ENCODE measurements at regions of chr11 and their contacts with region 1.

Region 1: DNA sequence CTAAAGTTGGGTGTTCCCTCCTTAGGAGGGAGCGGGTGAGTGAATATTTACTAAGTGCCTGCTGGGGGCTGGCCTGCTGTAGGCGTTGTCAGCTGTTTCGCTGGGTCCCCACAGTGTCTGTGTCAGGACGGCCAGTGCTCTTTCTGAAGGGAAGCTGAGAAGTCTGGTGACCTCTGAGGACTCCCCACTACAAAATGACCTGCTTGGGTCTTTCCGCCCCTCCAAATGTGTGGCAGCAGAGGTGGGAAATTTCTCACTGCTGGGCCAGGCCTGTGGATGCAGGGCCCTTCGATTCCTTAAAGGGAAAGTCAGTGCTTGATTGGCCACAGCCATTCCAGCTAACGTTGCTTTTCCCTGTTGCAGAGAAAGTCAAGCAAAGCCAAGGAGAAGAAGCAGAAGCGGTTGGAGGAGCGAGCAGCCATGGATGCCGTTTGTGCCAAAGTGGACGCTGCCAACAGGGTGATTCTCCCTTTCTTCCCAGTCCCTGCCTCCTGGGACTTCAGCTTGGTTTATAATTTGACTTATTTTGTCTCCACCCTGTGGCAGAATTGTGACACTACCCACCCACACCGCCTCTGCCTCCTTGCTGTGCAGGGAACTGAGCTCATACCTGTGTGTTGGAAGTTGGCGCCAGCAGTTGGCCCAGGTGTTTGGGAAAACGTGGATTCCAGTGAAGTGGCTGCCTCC is 6.8 kb downstream of the NAA40 start:
- DNase-seq: peak in 6 of 9 experiments; percentile 28 to 71 (median 58)
- ATAC-seq: peak; percentile 89
- H3K4me3 ChIP-seq: no peak overlapping the region
- H3K4me3 Mint-ChIP-seq: no peak overlapping the region
- H3K27ac ChIP-seq: no peak overlapping the region
- H3K27ac Mint-ChIP-seq: no peak overlapping the region
- H3K4me1 ChIP-seq: peaks cover under 1% of the 10 kb centered on the region
- H3K4me1 Mint-ChIP-seq: peaks cover 14% of the 10 kb centered on the region
- H3K27me3 ChIP-seq: no peaks in the 10 kb centered on the region
- H3K27me3 Mint-ChIP-seq: no peaks in the 10 kb centered on the region
- CTCF ChIP-seq: peak; percentile 62

Region 2: GRCh38 chr11:63906585-63906984 is 39.0 kb before region 1 on chr11:
- CTCF ChIA-PET with region 1: interaction called, 7 read pairs
- POLR2A ChIA-PET with region 1: no interaction called
- intact Hi-C with region 1: loop called (anchors 5 kb)
- DNase-seq: peak; percentile 28 to 74 (median 68)
- ATAC-seq: peak; percentile 77
- H3K4me3 ChIP-seq: no peak overlapping the region
- H3K4me3 Mint-ChIP-seq: no peak overlapping the region
- H3K27ac ChIP-seq: no peak overlapping the region
- H3K27ac Mint-ChIP-seq: no peak overlapping the region
- H3K4me1 ChIP-seq: no peaks in the 10 kb centered on the region
- H3K4me1 Mint-ChIP-seq: peaks cover 3% of the 10 kb centered on the region
- H3K27me3 ChIP-seq: no peaks in the 10 kb centered on the region
- H3K27me3 Mint-ChIP-seq: no peaks in the 10 kb centered on the region
- CTCF ChIP-seq: peak; percentile 38

Region 3: DNA sequence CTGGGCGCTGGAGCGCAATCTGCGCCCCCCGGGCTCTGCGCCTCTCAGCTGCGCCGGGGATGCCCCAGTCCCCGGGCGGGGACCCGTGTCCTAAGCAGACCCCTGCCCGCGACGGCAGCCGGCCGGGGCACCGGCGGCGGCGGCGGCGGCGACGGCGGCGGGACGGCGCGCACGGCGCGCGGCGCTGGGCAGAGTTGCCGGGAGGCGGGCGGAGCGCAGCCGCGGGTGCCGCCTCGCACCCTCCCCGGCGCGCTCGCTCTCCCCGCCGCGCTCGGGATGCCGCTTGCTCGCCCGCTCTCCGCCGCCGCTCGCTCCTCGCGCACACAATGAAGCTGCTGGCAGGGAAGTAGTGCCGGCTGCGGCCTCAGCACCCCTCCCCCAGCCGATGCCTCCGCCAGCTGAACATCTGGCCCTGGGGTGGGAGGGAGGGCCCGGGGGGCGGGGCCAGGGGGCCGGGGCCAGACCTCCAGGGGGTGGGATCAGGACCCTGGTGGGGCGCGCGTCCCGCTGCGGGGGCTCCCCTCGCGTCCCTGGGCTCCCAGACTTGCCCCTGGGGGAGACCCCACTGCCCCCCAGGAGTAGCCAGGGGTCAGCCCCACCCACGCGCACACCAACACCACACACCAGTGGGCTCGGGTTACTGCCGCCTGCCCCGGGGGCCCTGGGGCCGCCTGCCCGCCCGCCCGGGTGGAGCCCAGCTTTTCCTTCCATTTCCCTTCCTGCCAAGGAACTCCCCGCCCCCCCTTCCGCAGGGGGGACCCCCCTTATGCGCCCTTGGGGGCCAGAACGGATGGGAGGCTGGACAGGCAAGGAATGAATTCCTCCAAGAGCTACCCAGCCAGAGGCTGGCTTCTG is 28.6 kb before region 1 on chr11 and contains the start of gene RCOR2:
- CTCF ChIA-PET with region 1: interaction called, 12 read pairs
- POLR2A ChIA-PET with region 1: interaction called, 3 read pairs
- intact Hi-C with region 1: no loop called
- DNase-seq: peak in 8 of 9 experiments; percentile 32 to 78 (median 58)
- ATAC-seq: peak; percentile 65
- H3K4me3 ChIP-seq: peak within 1 kb of the TSS; percentile 47 to 48
- H3K4me3 Mint-ChIP-seq: peak within 1 kb of the TSS; percentile 85
- H3K27ac ChIP-seq: no peak within 1 kb of the TSS
- H3K27ac Mint-ChIP-seq: no peak within 1 kb of the TSS
- H3K4me1 ChIP-seq: peaks cover 28% of the 10 kb centered on the region
- H3K4me1 Mint-ChIP-seq: peaks cover 15% of the 10 kb centered on the region
- H3K27me3 ChIP-seq: no peaks in the 10 kb centered on the region
- H3K27me3 Mint-ChIP-seq: no peaks in the 10 kb centered on the region
- CTCF ChIP-seq: no peak
- total RNA-seq, gene RCOR2: not detected

Region 4: DNA sequence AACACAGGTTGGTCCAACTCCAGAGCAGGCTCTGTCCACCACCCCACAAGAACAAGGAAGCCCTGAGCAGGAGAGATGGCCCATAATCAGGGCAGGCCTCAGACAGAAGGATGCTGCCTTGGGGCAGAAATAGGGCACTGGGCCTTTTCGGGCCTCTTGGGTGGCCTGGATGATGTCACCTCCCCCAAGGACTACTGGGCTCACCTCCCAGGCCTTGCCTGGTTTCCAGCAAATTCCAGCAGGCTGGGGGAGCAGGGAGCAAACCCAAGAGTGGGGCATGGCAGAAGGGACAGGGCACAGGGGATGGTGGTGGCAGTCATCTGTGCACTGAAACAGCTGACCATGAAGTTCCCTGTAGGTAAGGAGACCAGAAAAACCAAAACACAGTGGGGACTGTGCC is 12.2 kb before region 1 on chr11:
- CTCF ChIA-PET with region 1: interaction called, 17 read pairs
- POLR2A ChIA-PET with region 1: no interaction called
- intact Hi-C with region 1: no loop called
- DNase-seq: no peak
- ATAC-seq: no peak
- H3K4me3 ChIP-seq: no peak overlapping the region
- H3K4me3 Mint-ChIP-seq: no peak overlapping the region
- H3K27ac ChIP-seq: no peak overlapping the region
- H3K27ac Mint-ChIP-seq: no peak overlapping the region
- H3K4me1 ChIP-seq: peaks cover 8% of the 10 kb centered on the region
- H3K4me1 Mint-ChIP-seq: peaks cover 8% of the 10 kb centered on the region
- H3K27me3 ChIP-seq: no peaks in the 10 kb centered on the region
- H3K27me3 Mint-ChIP-seq: no peaks in the 10 kb centered on the region
- CTCF ChIP-seq: no peak

Region 5: DNA sequence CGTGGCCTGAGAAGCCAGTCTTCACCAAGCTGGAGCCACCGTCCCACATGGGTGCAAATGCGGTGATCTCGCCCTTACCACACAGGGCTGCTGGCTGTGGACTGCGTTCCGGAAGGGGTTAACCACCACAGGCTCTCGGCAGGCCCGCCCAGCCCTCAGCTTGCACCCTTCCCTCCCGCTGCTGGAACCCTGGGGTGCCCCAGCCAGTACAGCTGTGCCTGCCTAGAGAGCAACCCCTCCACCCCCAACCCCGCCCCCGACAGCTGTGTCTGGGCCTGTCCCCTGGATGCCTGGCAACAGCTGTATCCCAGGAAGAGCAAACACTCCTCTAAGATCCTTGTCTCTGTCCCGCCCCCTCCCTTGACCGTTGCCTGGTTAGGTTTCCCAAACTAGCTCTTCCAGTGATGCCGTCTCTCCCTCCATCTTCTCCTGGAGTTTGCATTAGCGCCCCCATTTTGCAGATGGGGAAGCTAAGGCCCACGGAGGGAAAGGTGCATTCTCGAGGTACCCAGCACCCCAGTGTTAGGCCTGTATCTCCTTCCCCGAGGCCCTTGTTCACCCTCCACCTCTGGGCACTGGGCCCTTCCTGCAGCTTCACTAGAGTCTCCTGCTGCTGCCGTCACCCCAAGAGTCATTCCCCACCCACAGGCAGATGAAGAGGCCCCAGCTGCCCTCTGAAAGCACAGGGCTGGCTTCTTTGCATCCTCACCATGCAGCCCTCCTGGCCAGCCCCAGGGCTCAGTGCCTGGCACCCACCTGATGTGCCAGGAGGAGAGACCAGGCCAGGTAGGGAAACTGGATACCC is 16.2 kb after region 1 on chr11:
- CTCF ChIA-PET with region 1: interaction called, 74 read pairs
- POLR2A ChIA-PET with region 1: interaction called, 4 read pairs
- intact Hi-C with region 1: no loop called
- DNase-seq: peak in 3 of 9 experiments; percentile 10 to 63 (median 59)
- ATAC-seq: peak; percentile 49
- H3K4me3 ChIP-seq: no peak overlapping the region
- H3K4me3 Mint-ChIP-seq: no peak overlapping the region
- H3K27ac ChIP-seq: no peak overlapping the region
- H3K27ac Mint-ChIP-seq: no peak overlapping the region
- H3K4me1 ChIP-seq: peaks cover 9% of the 10 kb centered on the region
- H3K4me1 Mint-ChIP-seq: peaks cover 12% of the 10 kb centered on the region
- H3K27me3 ChIP-seq: no peaks in the 10 kb centered on the region
- H3K27me3 Mint-ChIP-seq: no peaks in the 10 kb centered on the region
- CTCF ChIP-seq: no peak

Measured in CD8-positive, alpha-beta T cell (primary cell).